CD4-positive, alpha-beta T cell (primary cell): ENCODE measurements at regions of chr3 and their contacts with region 1.

Region 1: GRCh38 chr3:82202269-82202668 is 440.8 kb upstream of the GBE1 start:
- DNase-seq: no peak
- ATAC-seq: no peak
- H3K4me3 ChIP-seq: no peak overlapping the region
- H3K4me3 Mint-ChIP-seq: no peak overlapping the region
- H3K27ac ChIP-seq: no peak overlapping the region
- H3K27ac Mint-ChIP-seq: no peak overlapping the region
- H3K4me1 ChIP-seq: no peaks in the 10 kb centered on the region
- H3K4me1 Mint-ChIP-seq: no peaks in the 10 kb centered on the region
- H3K27me3 ChIP-seq: no peaks in the 10 kb centered on the region
- H3K27me3 Mint-ChIP-seq: no peaks in the 10 kb centered on the region
- CTCF ChIP-seq: no peak

Region 2: DNA sequence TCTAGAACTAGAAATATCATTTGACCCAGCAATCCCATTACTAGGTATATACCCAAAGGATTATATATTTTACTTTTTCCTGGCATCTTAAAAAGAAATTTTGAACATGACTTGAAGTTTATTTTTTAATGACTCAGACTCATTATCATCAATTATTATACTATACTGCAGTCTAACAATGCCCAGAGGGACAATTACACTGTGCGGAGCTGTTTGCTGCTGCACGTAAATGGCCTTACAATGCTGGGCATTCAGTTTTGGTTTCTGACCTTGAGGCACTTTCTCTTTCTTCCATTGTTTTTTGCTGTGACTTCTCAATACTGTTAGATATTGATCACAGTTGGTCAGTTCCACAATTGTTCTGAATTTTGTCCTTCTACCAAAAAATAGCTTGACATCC is 569.6 kb before region 1 on chr3:
- CTCF ChIA-PET with region 1: no interaction called
- POLR2A ChIA-PET with region 1: no interaction called
- intact Hi-C with region 1: loop called in 1 of 2 experiments (anchors 5 kb)
- DNase-seq: no peak
- ATAC-seq: no peak
- H3K4me3 ChIP-seq: no peak overlapping the region
- H3K4me3 Mint-ChIP-seq: no peak overlapping the region
- H3K27ac ChIP-seq: no peak overlapping the region
- H3K27ac Mint-ChIP-seq: no peak overlapping the region
- H3K4me1 ChIP-seq: no peaks in the 10 kb centered on the region
- H3K4me1 Mint-ChIP-seq: no peaks in the 10 kb centered on the region
- H3K27me3 ChIP-seq: no peaks in the 10 kb centered on the region
- H3K27me3 Mint-ChIP-seq: no peaks in the 10 kb centered on the region
- CTCF ChIP-seq: no peak